HEK293 (cell line): ENCODE measurements at regions of chr17 and their contacts with region 1.

Region 1: GRCh38 chr17:8118769-8119580 is 661 bp upstream of the ALOXE3 start:
- H3K4me3 ChIP-seq: peak overlapping the region; percentile 48
- H3K27ac ChIP-seq: peak overlapping the region; percentile 72
- H3K4me1 ChIP-seq: peaks cover 2% of the 10 kb centered on the region
- CTCF ChIP-seq: peak; percentile 90

Region 2: DNA sequence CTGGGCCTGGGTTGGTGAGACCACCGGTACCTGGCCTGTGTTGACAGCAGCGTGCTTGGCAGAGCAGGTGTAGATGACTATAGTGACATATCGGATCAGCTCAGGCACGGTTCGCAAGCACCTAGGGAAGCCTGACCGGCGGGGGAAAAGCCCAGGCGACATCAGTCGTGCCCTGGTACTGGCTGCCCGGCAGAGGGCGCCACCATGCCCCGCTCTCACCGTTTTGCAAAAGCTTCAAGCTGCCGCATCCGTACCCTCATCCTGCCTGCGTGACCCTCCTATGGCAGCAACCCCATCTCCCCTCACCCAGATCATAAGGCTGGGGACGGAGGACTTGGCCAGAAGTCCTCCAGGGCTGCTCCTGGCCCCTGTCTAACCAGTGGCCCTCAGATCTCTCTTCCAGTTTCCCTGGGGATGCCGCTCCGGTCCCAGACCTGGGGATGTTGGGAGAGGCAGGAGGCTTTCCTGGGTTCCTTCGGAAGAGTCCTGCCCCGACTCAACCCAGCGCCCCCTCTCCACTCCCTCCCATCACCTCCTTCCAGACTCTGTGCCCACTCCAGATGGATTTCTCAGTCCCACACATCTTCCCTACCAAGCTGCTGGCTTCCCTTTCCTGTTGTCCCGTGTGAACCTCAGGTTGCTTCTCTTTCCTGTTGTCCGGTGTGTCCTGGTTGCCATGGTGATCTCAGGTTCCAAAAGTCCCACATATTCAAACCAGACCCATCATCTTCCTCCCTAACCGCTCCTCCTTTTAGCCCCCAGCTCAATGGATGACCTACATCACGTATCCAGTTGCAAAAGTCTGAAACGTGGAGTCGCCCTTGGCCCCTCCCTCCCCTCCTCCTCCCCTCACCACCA is 45.1 kb before region 1 on chr17:
- CTCF ChIA-PET with region 1: interaction called, 54 read pairs
- POLR2A ChIA-PET with region 1: interaction called, 7 read pairs
- H3K4me3 ChIP-seq: peak overlapping the region; percentile 28
- H3K27ac ChIP-seq: no peak overlapping the region
- H3K4me1 ChIP-seq: no peaks in the 10 kb centered on the region
- CTCF ChIP-seq: peak; percentile 92

Region 3: GRCh38 chr17:8100111-8100510 is 18.9 kb before region 1 on chr17:
- CTCF ChIA-PET with region 1: interaction called, 11 read pairs
- POLR2A ChIA-PET with region 1: interaction called, 6 read pairs
- H3K4me3 ChIP-seq: no peak overlapping the region
- H3K27ac ChIP-seq: no peak overlapping the region
- H3K4me1 ChIP-seq: no peaks in the 10 kb centered on the region
- CTCF ChIP-seq: no peak

Region 4: DNA sequence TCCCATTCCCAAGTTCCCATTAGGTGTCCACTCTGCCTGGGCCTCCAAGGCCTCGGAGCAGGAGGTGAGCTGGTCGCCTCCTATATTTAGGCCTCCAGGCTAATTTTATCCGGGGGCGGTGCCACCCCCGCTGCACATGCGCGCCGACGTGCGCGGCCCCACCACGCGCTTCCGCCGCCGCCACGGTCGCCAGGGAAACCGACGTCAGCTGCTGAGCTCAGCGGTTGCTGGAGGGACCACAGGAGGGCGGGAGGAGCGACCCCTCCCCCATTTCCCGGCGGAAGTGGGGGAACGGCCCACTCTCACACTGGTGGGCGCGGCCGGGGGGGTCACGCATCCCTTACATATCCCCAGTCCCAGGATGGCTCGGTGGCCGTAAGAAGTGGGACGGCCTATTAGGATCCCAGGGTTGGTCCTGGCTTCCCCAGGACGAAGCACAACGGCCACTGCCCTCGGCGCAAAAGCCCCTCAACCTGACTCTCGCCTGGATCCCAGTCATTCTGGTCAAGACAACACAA is 32.2 kb after region 1 on chr17:
- CTCF ChIA-PET with region 1: interaction called, 38 read pairs
- POLR2A ChIA-PET with region 1: interaction called, 18 read pairs
- H3K4me3 ChIP-seq: peak overlapping the region; percentile 44
- H3K27ac ChIP-seq: no peak overlapping the region; the same call in 1 of the 2 replicates
- H3K4me1 ChIP-seq: peaks cover 25% of the 10 kb centered on the region
- CTCF ChIP-seq: no peak

Region 5: GRCh38 chr17:8189711-8190477 is 70.9 kb after region 1 on chr17 and contains the start of gene BORCS6:
- CTCF ChIA-PET with region 1: interaction called, 12 read pairs
- POLR2A ChIA-PET with region 1: interaction called, 9 read pairs
- H3K4me3 ChIP-seq: peak within 1 kb of the TSS; percentile 75
- H3K27ac ChIP-seq: peak within 1 kb of the TSS; percentile 75; the same call in 1 of the 2 replicates
- H3K4me1 ChIP-seq: peaks cover 13% of the 10 kb centered on the region
- CTCF ChIP-seq: peak; percentile 88

Region 6: DNA sequence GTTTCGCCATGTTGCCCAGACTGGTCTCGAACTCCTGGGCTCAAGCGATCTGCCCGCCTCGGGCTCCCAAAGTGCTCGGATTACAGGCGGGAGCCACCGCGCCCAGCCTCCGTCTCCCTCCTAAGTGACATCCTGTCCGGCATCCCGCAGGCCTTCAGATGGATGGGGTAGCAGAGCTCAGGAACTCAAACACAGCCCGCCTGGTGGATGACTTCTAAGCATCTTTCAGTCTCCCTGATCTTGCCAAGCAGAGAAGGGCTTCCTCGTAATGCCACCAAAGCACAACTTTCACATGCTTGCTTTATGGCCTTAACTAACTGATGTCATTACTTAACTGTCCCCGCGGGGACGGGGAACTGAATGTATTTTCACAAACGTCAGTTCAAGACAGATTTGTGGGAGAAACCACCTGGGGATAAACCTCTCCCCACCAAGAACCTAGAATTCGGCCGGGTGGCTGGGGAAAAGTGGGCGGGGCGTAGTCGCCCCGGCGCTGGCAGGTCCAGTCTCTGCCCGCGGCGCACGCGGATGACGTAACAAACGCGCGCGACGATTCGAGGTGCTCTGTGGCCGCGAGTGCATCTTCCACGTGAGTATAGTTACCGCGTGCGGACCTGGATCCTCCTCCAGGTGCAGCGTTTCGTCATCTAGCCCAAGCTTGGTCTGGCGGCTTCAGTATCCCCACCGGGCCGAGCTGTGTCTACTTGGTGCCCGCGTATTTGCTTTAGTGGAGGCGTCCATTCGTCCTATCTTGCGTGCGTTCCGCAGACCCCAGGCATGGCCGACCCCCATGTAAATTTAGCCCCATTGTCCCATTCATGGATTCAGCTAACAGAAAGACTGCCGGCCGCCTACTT is 130.0 kb after region 1 on chr17 and contains the start of gene PFAS:
- CTCF ChIA-PET with region 1: interaction called, 10 read pairs
- POLR2A ChIA-PET with region 1: interaction called, 19 read pairs
- H3K4me3 ChIP-seq: peak within 1 kb of the TSS; percentile 77
- H3K27ac ChIP-seq: peak within 1 kb of the TSS; percentile 91
- H3K4me1 ChIP-seq: peaks cover 6% of the 10 kb centered on the region
- CTCF ChIP-seq: no peak